CD8-positive, alpha-beta memory T cell (primary cell): ENCODE measurements at regions of chr6 and their contacts with region 1.

Region 1: DNA sequence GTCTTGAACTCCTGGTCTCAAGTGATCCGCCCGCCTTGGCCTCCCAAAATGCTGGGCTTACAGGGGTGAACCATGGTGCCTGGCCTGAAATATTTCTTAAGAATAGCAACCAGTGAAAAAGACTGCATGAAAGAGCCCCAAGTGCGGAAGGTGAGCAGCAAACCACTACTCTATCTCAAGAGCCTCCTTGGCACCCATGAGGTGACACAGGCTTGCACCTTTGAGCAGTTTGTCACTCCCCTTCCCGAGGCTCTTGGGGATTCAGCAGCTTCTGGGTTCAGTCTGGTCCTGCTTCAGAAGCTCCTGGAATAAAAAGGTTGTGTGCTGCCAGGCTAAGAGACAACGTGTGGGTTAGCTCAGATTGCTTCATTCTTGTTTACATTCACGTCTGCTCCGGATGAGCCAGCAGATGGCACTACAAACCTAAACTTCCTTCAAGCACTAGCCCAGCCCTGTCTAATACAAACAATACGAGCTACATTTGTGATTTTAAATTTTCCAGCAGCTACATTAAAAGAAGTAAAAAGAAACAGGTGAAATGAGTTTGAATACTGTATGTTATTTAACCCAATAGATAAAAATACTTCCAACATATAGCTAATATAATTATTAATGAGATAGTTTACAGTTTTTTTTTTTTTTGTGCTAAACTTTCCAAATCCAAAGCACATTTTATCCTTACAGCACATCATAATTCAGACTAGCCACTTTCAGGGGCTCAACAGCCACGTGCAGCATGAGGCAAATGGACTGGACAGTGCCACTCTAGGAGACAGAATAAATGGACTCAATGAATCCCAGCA is 46.2 kb downstream of the GJA10 start:
- DNase-seq: peak; percentile 43 to 78 (median 59)
- H3K4me3 ChIP-seq: no peak overlapping the region
- H3K4me3 Mint-ChIP-seq: no peak overlapping the region
- H3K27ac ChIP-seq: no peak overlapping the region
- H3K27ac Mint-ChIP-seq: peak overlapping the region in 2 of 8 donors; percentile 7 to 35
- H3K4me1 ChIP-seq: peaks cover 13% of the 10 kb centered on the region
- H3K4me1 Mint-ChIP-seq: peaks cover 9 to 21% (median 16%) of the 10 kb centered on the region in 3 donors
- H3K27me3 ChIP-seq: no peaks in the 10 kb centered on the region
- H3K27me3 Mint-ChIP-seq: no peaks in the 10 kb centered on the region

Region 2: GRCh38 chr6:89909991-89910390 is 30.4 kb before region 1 on chr6:
- CTCF ChIA-PET with region 1: no interaction called
- POLR2A ChIA-PET with region 1: no interaction called
- DNase-seq: no peak
- H3K4me3 ChIP-seq: no peak overlapping the region
- H3K4me3 Mint-ChIP-seq: no peak overlapping the region
- H3K27ac ChIP-seq: no peak overlapping the region
- H3K27ac Mint-ChIP-seq: peak overlapping the region in 1 of 8 donors; percentile 51
- H3K4me1 ChIP-seq: no peaks in the 10 kb centered on the region
- H3K4me1 Mint-ChIP-seq: peaks cover 0 to 4% (median 3%) of the 10 kb centered on the region in 3 donors
- H3K27me3 ChIP-seq: no peaks in the 10 kb centered on the region
- H3K27me3 Mint-ChIP-seq: peaks cover 3 to 27% of the 10 kb centered on the region in 2 donors

Region 3: DNA sequence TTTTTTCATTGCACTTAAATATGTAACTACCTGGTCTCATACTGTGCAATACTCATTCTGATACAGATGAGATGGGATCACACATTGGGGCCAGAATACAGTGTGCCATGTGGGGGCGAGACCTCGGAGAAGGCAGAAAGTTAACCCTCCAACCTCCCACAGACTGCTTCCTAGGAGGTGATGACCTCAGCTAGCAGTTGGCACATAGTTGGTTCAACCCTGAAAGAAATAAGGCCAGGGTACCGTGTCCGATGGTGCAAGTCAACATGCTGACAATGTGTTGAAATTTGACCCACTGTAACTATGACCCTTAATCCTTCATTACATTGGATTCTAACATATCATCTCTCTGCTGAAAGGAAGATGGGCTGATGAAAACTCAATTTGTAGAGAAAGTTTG is 15.8 kb after region 1 on chr6:
- CTCF ChIA-PET with region 1: interaction called, 12 read pairs
- POLR2A ChIA-PET with region 1: interaction called, 3 read pairs
- DNase-seq: no peak
- H3K4me3 ChIP-seq: no peak overlapping the region
- H3K4me3 Mint-ChIP-seq: no peak overlapping the region
- H3K27ac ChIP-seq: no peak overlapping the region
- H3K27ac Mint-ChIP-seq: peak overlapping the region in 6 of 8 donors; percentile 1 to 86 (median 74)
- H3K4me1 ChIP-seq: peaks cover 51% of the 10 kb centered on the region
- H3K4me1 Mint-ChIP-seq: peaks cover 59 to 69% (median 66%) of the 10 kb centered on the region in 3 donors
- H3K27me3 ChIP-seq: no peaks in the 10 kb centered on the region
- H3K27me3 Mint-ChIP-seq: no peaks in the 10 kb centered on the region

Region 4: DNA sequence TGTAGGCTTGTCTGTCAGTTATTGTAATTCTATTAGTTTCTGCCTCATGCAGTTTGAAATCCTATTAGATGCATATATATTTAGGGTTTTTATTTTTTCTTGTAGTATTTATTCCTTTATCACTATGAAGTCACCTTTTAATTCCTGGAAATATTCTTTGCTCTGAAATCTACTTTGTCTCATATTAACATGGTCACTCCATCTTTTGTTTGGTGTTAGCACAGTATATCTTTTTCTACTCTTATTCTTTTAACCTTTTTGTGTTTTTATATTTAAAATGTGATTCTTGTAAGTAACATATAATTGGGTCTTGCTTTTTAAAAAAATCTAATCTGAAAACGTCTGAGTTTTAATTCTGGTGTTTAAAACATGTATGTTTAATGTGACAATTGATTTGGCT is 75.5 kb after region 1 on chr6:
- CTCF ChIA-PET with region 1: no interaction called
- POLR2A ChIA-PET with region 1: no interaction called
- DNase-seq: no peak
- H3K4me3 ChIP-seq: no peak overlapping the region
- H3K4me3 Mint-ChIP-seq: no peak overlapping the region
- H3K27ac ChIP-seq: no peak overlapping the region
- H3K27ac Mint-ChIP-seq: no peak overlapping the region
- H3K4me1 ChIP-seq: no peaks in the 10 kb centered on the region
- H3K4me1 Mint-ChIP-seq: peaks cover 5 to 11% (median 7%) of the 10 kb centered on the region in 3 donors
- H3K27me3 ChIP-seq: no peaks in the 10 kb centered on the region
- H3K27me3 Mint-ChIP-seq: no peaks in the 10 kb centered on the region

Region 5: GRCh38 chr6:90285611-90286381 is 345.4 kb after region 1 on chr6:
- CTCF ChIA-PET with region 1: interaction called, 11 read pairs
- POLR2A ChIA-PET with region 1: no interaction called
- DNase-seq: peak; percentile 21 to 80 (median 59)
- H3K4me3 ChIP-seq: peak overlapping the region; percentile 59
- H3K4me3 Mint-ChIP-seq: peak overlapping the region; percentile 78 to 91 (median 89)
- H3K27ac ChIP-seq: no peak overlapping the region
- H3K27ac Mint-ChIP-seq: peak overlapping the region; percentile 72 to 95 (median 86)
- H3K4me1 ChIP-seq: peaks cover 71% of the 10 kb centered on the region
- H3K4me1 Mint-ChIP-seq: peaks cover 54 to 86% (median 78%) of the 10 kb centered on the region in 3 donors
- H3K27me3 ChIP-seq: no peaks in the 10 kb centered on the region
- H3K27me3 Mint-ChIP-seq: peaks cover 0 to 1% of the 10 kb centered on the region in 2 donors

Region 6: GRCh38 chr6:90393232-90393884 is 452.9 kb after region 1 on chr6:
- CTCF ChIA-PET with region 1: interaction called, 25 read pairs
- POLR2A ChIA-PET with region 1: no interaction called
- DNase-seq: peak; percentile 35 to 79 (median 69)
- H3K4me3 ChIP-seq: no peak overlapping the region
- H3K4me3 Mint-ChIP-seq: no peak overlapping the region
- H3K27ac ChIP-seq: no peak overlapping the region
- H3K27ac Mint-ChIP-seq: peak overlapping the region; percentile 0 to 75 (median 60)
- H3K4me1 ChIP-seq: peaks cover 25% of the 10 kb centered on the region
- H3K4me1 Mint-ChIP-seq: peaks cover 30 to 36% (median 34%) of the 10 kb centered on the region in 3 donors
- H3K27me3 ChIP-seq: no peaks in the 10 kb centered on the region
- H3K27me3 Mint-ChIP-seq: no peaks in the 10 kb centered on the region

Region 7: DNA sequence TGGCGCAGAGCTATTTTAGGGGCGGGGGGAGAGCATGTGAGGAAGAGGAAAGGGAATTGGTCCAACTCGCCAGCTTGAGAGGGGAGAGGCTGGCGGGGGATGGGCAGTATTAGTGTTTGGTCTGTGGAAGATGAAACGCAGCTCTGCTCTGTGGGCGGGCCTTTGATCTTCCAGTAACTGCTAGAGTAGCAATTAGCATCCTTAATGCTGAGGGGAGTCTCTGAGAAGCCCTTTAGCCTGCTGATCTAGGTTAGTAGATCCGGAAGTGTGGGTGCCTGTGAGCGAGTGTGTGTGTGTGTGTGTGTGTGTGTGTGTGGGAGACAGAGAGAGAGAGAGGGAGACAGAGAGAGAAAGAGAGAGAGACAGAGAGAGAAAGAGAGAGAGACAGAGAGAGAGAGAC is 473.4 kb after region 1 on chr6:
- CTCF ChIA-PET with region 1: interaction called, 12 read pairs
- POLR2A ChIA-PET with region 1: no interaction called
- DNase-seq: peak; percentile 50 to 91 (median 76)
- H3K4me3 ChIP-seq: peak overlapping the region; percentile 10
- H3K4me3 Mint-ChIP-seq: peak overlapping the region; percentile 68 to 92 (median 84)
- H3K27ac ChIP-seq: no peak overlapping the region
- H3K27ac Mint-ChIP-seq: peak overlapping the region; percentile 86 to 99 (median 95)
- H3K4me1 ChIP-seq: peaks cover 33% of the 10 kb centered on the region
- H3K4me1 Mint-ChIP-seq: peaks cover 37 to 50% (median 48%) of the 10 kb centered on the region in 3 donors
- H3K27me3 ChIP-seq: no peaks in the 10 kb centered on the region
- H3K27me3 Mint-ChIP-seq: peaks cover 0 to 6% of the 10 kb centered on the region in 2 donors

Region 8: GRCh38 chr6:90478789-90479602 is 538.6 kb after region 1 on chr6:
- CTCF ChIA-PET with region 1: interaction called, 113 read pairs
- POLR2A ChIA-PET with region 1: interaction called, 4 read pairs
- DNase-seq: peak; percentile 67 to 89 (median 74)
- H3K4me3 ChIP-seq: no peak overlapping the region
- H3K4me3 Mint-ChIP-seq: peak overlapping the region in 4 of 7 donors; percentile 36 to 55 (median 43)
- H3K27ac ChIP-seq: no peak overlapping the region
- H3K27ac Mint-ChIP-seq: peak overlapping the region in 6 of 8 donors; percentile 17 to 89 (median 84)
- H3K4me1 ChIP-seq: peaks cover 15% of the 10 kb centered on the region
- H3K4me1 Mint-ChIP-seq: peaks cover 14 to 36% (median 28%) of the 10 kb centered on the region in 3 donors
- H3K27me3 ChIP-seq: no peaks in the 10 kb centered on the region
- H3K27me3 Mint-ChIP-seq: no peaks in the 10 kb centered on the region